Caco-2 (cell line): ENCODE measurements at regions of chr12 and their contacts with region 1.

Region 1: GRCh38 chr12:116015525-116015924 is 262.0 kb downstream of the MED13L start:
- DNase-seq: peak in 1 of 2 experiments; percentile 20
- H3K4me3 ChIP-seq: no peak overlapping the region
- H3K4me3 Mint-ChIP-seq: no peak overlapping the region
- H3K27ac Mint-ChIP-seq: no peak overlapping the region
- H3K4me1 ChIP-seq: no peaks in the 10 kb centered on the region
- H3K4me1 Mint-ChIP-seq: no peaks in the 10 kb centered on the region
- H3K27me3 ChIP-seq: no peaks in the 10 kb centered on the region
- H3K27me3 Mint-ChIP-seq: no peaks in the 10 kb centered on the region
- CTCF ChIP-seq: peak; percentile 16 to 49

Region 2: DNA sequence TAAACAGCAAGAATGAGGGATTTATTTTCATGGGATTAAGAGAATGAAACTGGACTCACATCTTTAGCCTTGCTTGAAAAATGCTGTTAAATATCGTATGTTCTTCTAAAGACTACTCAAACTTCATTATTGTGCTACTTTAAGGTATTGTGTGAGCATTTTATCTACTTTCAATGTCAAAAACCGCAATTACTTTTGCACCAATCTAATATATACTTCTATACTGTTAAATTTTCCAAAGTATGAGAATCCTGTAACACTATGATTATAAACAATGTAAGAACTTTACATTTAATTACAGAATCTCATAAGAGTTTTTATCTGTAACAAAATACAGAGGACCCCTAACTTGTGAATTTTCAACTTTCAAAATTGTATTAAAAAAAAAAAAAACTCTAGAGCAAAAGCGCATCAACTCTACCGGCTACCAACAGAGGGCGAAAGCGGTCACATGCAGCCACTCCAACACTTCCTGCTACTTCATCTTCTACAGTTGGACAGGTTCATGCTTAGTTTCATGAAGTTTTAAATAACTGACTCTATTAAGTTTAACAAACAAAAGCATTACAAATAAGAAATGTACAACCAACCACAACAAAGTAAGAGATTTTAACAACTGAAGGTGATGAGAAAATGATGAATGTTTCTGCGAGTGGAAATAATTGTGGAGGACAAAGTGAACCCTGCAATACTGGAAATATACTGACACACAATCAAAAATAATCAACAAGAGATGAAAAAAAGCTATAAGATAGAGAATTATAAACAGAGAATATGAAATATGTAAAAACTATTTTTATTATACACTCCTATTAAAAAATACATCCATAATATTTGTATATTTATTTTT is 51.1 kb after region 1 on chr12:
- CTCF ChIA-PET with region 1: interaction called, 3 read pairs
- POLR2A ChIA-PET with region 1: no interaction called
- intact Hi-C with region 1: loop called (anchors 1 kb)
- DNase-seq: peak; percentile 54 to 60
- H3K4me3 ChIP-seq: no peak overlapping the region
- H3K4me3 Mint-ChIP-seq: no peak overlapping the region
- H3K27ac Mint-ChIP-seq: no peak overlapping the region
- H3K4me1 ChIP-seq: no peaks in the 10 kb centered on the region; the same call in 1 of the 2 replicates
- H3K4me1 Mint-ChIP-seq: peaks cover 19% of the 10 kb centered on the region
- H3K27me3 ChIP-seq: no peaks in the 10 kb centered on the region
- H3K27me3 Mint-ChIP-seq: no peaks in the 10 kb centered on the region
- CTCF ChIP-seq: peak; percentile 84 to 93

Region 3: DNA sequence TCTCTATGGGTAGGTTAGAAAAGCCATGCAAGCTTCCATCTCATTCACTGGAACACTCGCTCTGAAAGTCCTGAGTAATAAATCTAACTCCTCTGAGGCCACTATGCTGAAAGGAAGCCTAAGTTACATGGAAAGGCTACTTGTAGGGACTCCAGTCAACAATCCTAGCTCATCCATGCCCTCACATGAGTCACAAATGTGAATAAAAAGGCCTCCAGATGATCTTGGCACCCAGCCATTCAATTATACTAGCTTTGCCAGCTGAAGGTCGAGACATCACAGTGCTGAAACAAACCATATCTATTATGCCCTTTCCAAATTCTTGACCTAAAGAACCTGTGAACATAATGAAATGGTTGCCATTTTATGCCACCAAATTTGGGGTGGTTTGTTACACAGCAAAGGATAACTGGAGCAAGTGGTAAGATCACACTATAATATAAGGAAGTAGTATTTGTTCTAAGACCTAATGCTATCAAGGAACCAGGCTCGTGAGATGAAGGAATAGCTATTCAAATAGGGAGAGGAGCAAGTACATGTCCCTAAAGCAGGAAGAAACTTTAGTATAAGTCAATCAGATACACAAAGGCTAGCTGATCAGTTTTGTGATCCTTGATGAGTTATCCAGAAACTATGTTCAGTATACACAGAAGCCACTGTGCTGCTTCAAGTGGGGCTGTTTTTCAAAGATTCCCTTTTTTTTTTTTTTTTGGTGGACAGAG is 119.8 kb after region 1 on chr12:
- CTCF ChIA-PET with region 1: no interaction called
- POLR2A ChIA-PET with region 1: no interaction called
- intact Hi-C with region 1: loop called (anchors 10 kb)
- DNase-seq: no peak
- H3K4me3 ChIP-seq: no peak overlapping the region
- H3K4me3 Mint-ChIP-seq: no peak overlapping the region
- H3K27ac Mint-ChIP-seq: no peak overlapping the region
- H3K4me1 ChIP-seq: no peaks in the 10 kb centered on the region; the same call in none of the 2 replicates
- H3K4me1 Mint-ChIP-seq: peaks cover 19% of the 10 kb centered on the region
- H3K27me3 ChIP-seq: no peaks in the 10 kb centered on the region
- H3K27me3 Mint-ChIP-seq: no peaks in the 10 kb centered on the region
- CTCF ChIP-seq: no peak

Region 4: GRCh38 chr12:116194935-116195431 is 179.5 kb after region 1 on chr12:
- CTCF ChIA-PET with region 1: no interaction called
- POLR2A ChIA-PET with region 1: no interaction called
- intact Hi-C with region 1: loop called (anchors 10 kb)
- DNase-seq: no peak
- H3K4me3 ChIP-seq: no peak overlapping the region
- H3K4me3 Mint-ChIP-seq: no peak overlapping the region
- H3K27ac Mint-ChIP-seq: no peak overlapping the region
- H3K4me1 ChIP-seq: peaks cover 7% of the 10 kb centered on the region; the same call in 1 of the 2 replicates
- H3K4me1 Mint-ChIP-seq: peaks cover under 1% of the 10 kb centered on the region
- H3K27me3 ChIP-seq: no peaks in the 10 kb centered on the region
- H3K27me3 Mint-ChIP-seq: no peaks in the 10 kb centered on the region
- CTCF ChIP-seq: no peak

Region 5: GRCh38 chr12:116609319-116610114 is 594.0 kb after region 1 on chr12:
- CTCF ChIA-PET with region 1: interaction called, 11 read pairs
- POLR2A ChIA-PET with region 1: no interaction called
- intact Hi-C with region 1: no loop called
- DNase-seq: peak; percentile 54 to 55
- H3K4me3 ChIP-seq: no peak overlapping the region
- H3K4me3 Mint-ChIP-seq: no peak overlapping the region
- H3K27ac Mint-ChIP-seq: peak overlapping the region; percentile 32
- H3K4me1 ChIP-seq: peaks cover 25% of the 10 kb centered on the region
- H3K4me1 Mint-ChIP-seq: peaks cover 38% of the 10 kb centered on the region
- H3K27me3 ChIP-seq: no peaks in the 10 kb centered on the region
- H3K27me3 Mint-ChIP-seq: no peaks in the 10 kb centered on the region
- CTCF ChIP-seq: peak in 1 of 2 experiments; percentile 10